Activated naive CD4-positive, alpha-beta T cell treated with anti-CD3 and anti-CD28 coated beads for 36 hours (primary cell): ENCODE measurements at regions of chr9 and their contacts with region 1.

Region 1: GRCh38 chr9:32968101-32969011 is 33.1 kb downstream of the APTX start:
- DNase-seq: peak; percentile 78
- H3K4me3 Mint-ChIP-seq: no peak overlapping the region
- H3K27ac Mint-ChIP-seq: no peak overlapping the region
- H3K4me1 Mint-ChIP-seq: no peaks in the 10 kb centered on the region
- H3K27me3 Mint-ChIP-seq: no peaks in the 10 kb centered on the region

Region 2: DNA sequence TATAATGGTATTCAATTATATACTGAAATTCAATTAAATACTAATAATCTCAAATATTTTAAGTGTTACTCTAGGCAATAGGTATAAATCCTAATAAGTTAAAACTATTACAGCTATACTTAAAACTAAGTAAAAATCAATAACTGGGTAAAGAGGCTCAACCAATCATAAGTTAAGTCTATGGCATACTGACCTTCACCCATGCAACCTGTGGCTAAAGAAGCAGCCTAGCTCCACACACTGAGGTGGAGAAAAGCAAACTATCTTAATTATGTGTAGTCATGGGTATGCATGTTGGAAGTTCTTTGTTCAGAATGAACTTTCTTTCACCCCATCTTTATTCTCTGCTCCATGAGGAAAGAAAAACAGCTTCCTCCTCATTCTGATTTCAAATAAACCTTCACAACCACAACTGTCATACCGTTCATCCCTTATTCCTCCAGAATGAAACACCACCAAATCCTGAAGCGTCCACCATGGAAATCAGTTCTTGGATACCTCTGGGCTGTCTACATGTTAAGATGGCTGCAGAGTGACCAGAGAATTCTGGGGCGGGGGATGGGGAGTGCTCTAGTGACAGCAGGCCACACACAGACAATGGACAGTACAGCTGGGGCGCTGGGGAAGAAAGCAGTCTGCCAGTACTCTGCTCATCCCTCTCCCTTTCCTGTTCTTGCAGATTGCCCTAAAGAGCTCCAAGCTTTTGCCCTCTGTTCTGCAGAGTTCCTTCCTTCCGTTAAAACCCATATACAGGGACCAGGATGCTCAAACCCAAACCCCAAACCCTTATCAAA is 504.7 kb before region 1 on chr9:
- CTCF ChIA-PET with region 1: no interaction called
- intact Hi-C with region 1: no loop called
- DNase-seq: no peak
- H3K4me3 Mint-ChIP-seq: no peak overlapping the region
- H3K27ac Mint-ChIP-seq: no peak overlapping the region
- H3K4me1 Mint-ChIP-seq: no peaks in the 10 kb centered on the region
- H3K27me3 Mint-ChIP-seq: no peaks in the 10 kb centered on the region

Region 3: GRCh38 chr9:32502464-32502863 is 465.9 kb before region 1 on chr9:
- CTCF ChIA-PET with region 1: no interaction called
- intact Hi-C with region 1: no loop called
- DNase-seq: no peak
- H3K4me3 Mint-ChIP-seq: no peak overlapping the region
- H3K27ac Mint-ChIP-seq: no peak overlapping the region
- H3K4me1 Mint-ChIP-seq: peaks cover 2% of the 10 kb centered on the region
- H3K27me3 Mint-ChIP-seq: no peaks in the 10 kb centered on the region

Region 4: DNA sequence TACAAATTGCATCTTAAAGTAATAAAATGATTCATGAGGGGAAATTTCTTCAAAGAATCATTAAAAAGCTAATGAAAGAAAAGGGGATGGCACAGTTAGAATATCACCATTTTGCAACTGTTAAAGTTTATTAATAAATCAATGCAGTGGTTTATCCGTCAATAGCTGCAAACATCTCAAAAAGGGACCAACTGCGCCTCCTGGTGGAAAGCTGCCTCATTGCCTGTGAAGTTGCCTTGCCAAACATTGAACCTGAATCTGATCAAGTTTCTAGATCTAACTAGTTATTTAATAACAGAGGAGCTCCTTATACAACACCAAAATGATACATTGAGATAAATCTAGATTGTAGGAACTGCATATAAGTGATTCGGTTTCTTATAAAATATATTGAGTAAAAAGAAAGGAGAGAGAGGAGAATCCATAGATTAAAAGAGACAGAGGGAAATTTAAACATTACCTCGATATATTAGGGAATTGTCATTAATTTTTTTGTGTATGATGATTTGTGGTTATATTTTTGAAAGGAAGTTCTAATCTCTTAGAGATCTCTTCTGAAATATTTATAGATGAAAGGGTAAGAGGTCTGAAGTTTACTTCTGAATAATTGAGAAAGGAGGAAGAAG is 388.5 kb before region 1 on chr9:
- CTCF ChIA-PET with region 1: interaction called, 30 read pairs
- intact Hi-C with region 1: loop called (anchors 1 kb)
- DNase-seq: peak; percentile 89
- H3K4me3 Mint-ChIP-seq: no peak overlapping the region
- H3K27ac Mint-ChIP-seq: no peak overlapping the region
- H3K4me1 Mint-ChIP-seq: no peaks in the 10 kb centered on the region
- H3K27me3 Mint-ChIP-seq: peaks cover 13% of the 10 kb centered on the region

Region 5: DNA sequence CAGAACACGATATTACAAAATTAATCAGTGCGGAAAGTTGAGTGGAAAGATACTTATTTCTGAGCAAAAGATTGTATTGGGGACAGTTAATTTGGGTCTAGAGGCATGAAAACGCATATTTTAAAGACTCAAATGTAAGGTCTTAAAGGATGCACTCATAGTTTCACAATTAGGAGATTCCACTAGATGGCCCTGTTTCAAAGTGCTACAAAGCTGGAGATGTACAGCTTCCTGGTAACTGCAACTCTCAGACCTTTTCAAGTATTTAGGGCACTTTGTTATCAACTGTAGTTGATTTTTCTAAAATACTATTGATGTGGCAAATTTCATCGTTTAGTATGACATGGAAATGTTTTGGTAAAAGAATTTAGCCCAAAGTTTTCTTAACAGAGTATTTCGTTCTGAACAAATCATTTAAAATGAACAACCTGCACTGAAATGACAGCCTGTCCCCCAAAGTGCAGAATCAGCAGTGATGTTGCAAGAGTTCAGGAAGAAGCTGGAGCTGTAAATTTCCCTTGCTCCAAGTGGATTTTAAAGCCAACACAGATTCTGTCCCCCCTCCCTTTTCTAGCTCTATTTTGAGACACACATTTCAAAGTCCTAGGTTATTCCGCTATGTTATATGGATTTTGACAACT is 379.2 kb before region 1 on chr9:
- CTCF ChIA-PET with region 1: interaction called, 19 read pairs
- intact Hi-C with region 1: loop called (anchors 1 kb)
- DNase-seq: no peak
- H3K4me3 Mint-ChIP-seq: no peak overlapping the region
- H3K27ac Mint-ChIP-seq: no peak overlapping the region
- H3K4me1 Mint-ChIP-seq: no peaks in the 10 kb centered on the region
- H3K27me3 Mint-ChIP-seq: peaks cover 16% of the 10 kb centered on the region

Region 6: DNA sequence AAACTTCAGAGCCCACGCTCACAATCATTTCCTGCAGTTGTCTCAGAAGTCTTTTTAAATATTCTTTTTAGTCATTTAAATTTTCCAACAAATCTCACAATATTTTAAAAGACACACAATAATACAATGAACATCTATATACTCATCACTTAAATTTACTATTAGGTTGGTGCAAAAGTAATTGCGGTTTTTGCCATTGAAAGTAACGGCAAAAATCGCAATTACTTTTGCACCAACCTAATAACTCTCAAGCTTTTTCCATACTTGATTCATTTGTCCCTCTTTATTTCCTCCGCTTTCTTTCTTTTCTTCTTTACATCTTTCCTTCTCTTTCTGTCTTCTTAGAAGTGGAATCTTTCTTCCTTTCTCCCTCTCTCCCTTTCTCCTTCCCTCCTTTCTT is 204.2 kb before region 1 on chr9:
- CTCF ChIA-PET with region 1: no interaction called
- intact Hi-C with region 1: loop called (anchors 10 kb)
- DNase-seq: no peak
- H3K4me3 Mint-ChIP-seq: no peak overlapping the region
- H3K27ac Mint-ChIP-seq: no peak overlapping the region
- H3K4me1 Mint-ChIP-seq: no peaks in the 10 kb centered on the region
- H3K27me3 Mint-ChIP-seq: peaks cover 8% of the 10 kb centered on the region